ENCODE measurements at regions of chr15 and their contacts with region 1.

Region 1: DNA sequence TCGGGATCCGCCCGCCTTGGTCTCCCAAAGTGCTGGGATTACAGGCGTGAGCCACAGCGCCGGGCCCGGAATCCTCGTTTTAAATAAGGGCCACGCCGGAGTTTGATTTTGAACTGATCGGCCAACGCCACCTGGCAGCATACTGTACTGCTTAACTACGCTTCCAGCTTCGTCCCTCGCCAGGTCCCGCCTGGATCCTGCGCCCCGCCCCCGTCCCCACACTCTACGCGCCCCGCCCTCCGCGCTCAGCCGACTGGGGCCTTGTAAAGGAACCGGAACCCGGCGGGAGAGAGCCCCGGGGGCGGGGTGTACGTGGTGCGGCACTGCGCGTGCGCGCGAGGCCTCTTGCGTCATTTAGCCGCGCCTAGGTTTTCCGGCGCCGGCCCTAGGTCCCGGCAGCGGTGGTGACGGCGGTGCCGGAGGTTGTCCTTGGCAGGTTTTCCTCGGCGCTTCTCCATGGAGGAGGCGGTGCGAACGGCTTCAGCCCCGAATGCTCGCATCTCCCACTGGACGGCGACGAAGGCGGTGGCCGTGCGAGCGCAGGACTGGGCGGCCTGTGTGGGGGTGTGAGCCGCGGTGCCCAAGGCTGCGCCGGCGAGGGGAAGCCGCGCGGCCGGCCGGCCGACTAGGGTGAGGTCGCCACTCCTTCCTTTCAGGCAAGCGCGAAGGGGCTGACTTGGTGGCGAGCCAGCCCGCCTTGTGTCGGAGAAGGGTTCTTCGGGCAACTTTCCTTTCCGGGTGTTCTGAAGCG is at the start of gene NIPA2:
- DNase-seq: peak; percentile 98 to 100 (median 99)
- ATAC-seq: peak; percentile 99
- H3K4me3 ChIP-seq: peak within 1 kb of the TSS; percentile 60 to 92 (median 76)
- H3K27ac ChIP-seq: peak within 1 kb of the TSS; percentile 82 to 97 (median 94)
- H3K4me1 ChIP-seq: peaks cover 3 to 31% (median 20%) of the 10 kb centered on the region in 12 donors
- H3K27me3 ChIP-seq: no peaks in the 10 kb centered on the region
- CTCF ChIP-seq: peak in 1 of 12 donors; percentile 26
- POLR2A ChIP-seq: peak; percentile 38 to 88
- total RNA-seq, gene NIPA2: 17.4 to 32.4 (median 20.6) TPM

Region 2: GRCh38 chr15:22786868-22787698 is 51.4 kb before region 1 on chr15:
- intact Hi-C with region 1: loop called in 6 of 10 experiments (anchors 1 to 10 kb)
- DNase-seq: peak in 4 of 5 donors; percentile 16 to 35 (median 26)
- ATAC-seq: peak in 3 of 4 donors; percentile 27 to 32 (median 29)
- H3K4me3 ChIP-seq: peak overlapping the region; percentile 62 to 97 (median 78)
- H3K27ac ChIP-seq: peak overlapping the region; percentile 53 to 97 (median 90)
- H3K4me1 ChIP-seq: peaks cover 0 to 15% (median 4%) of the 10 kb centered on the region in 12 donors
- H3K27me3 ChIP-seq: no peaks in the 10 kb centered on the region
- CTCF ChIP-seq: no peak
- POLR2A ChIP-seq: no peak

Region 3: GRCh38 chr15:22795206-22796063 is 43.0 kb before region 1 on chr15:
- intact Hi-C with region 1: loop called in 1 of 10 experiments (anchors 5 kb)
- DNase-seq: no peak
- ATAC-seq: peak in 1 of 4 donors; percentile 33
- H3K4me3 ChIP-seq: no peak overlapping the region
- H3K27ac ChIP-seq: no peak overlapping the region
- H3K4me1 ChIP-seq: no peaks in the 10 kb centered on the region
- H3K27me3 ChIP-seq: no peaks in the 10 kb centered on the region
- CTCF ChIP-seq: no peak
- POLR2A ChIP-seq: no peak

Region 4: DNA sequence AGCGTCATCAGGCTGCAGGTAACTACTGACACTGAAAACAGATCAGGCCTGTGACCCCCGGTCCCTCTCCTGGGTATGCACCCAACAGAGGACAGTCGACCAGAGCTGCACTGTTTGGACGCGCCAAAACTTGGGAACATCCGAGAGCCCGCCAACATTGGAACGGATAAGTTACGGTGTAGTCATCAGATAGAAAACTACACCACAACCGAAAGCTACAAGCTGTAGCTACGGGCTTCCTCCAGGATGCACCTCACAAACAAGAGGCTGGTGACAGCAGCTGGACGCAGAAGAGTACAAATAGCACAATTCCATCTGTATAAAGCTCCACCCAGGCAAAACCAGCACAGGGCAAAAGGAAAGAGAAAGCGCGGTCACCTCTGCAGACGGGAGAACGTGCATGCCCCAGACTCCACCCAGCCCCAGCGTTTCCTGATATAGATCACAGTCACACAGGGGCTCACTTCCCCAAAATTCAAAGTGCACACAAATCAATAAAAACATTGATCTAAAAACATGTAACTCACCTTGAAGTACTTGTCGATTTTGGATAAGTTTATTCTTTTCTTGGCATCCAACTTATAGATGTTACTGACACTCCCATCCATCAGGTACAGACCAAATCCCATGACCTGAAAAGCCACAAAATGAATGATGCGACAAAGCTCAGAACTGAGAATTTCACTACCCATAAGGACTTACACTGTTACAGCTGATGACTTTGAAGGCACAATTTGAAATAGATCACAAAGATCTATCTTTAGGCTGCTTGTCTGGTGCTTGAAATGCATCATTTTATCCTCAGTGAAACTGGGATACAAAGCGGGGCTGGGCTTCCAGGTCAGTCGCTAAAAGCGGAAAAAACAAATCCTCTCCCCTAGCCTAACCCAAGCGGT is 98.4 kb after region 1 on chr15:
- intact Hi-C with region 1: no loop called
- DNase-seq: peak in 1 of 5 donors; percentile 5
- ATAC-seq: no peak
- H3K4me3 ChIP-seq: no peak overlapping the region
- H3K27ac ChIP-seq: no peak overlapping the region
- H3K4me1 ChIP-seq: peaks cover 0 to 7% (median 0%) of the 10 kb centered on the region in 12 donors
- H3K27me3 ChIP-seq: no peaks in the 10 kb centered on the region
- CTCF ChIP-seq: no peak
- POLR2A ChIP-seq: no peak

Region 5: DNA sequence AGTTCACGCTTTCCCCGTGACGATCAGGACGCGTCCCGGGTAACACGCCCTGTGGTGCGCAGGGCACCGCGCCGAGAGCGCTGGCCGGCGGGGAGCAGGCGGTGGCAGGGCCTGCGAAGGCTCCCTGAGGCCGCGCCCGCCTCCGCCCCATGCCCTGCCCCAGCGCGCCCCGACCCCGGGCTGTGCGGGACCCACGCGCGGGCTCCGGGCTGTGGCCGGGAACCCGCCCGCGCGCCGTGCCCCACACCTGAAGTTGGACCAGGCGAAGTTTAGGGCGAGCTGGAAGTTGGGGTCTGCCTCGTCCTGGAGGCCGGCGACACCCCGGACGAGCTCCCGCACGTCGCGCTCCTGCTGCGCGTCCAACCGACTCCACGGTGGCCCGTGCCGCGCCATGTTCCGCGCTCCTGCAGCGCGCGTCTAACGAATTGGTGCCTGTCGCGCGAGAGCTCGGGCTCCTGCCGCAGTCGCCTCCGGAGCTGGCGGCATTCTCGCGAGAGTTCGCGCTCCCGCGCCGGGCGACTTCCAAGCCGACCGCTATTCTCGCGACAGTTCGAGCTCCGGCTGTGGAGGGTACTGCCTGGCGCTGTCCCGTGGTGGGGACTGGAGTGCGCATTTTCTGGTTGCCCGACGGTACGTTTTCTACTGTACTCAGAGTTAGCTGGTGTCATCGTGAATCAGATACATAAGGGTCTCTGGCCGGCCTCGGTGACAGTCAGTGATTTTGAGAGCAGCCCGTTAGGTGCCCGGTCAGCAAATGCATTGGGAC is 200.9 kb after region 1 on chr15 and contains the start of gene TUBGCP5:
- intact Hi-C with region 1: loop called in 1 of 10 experiments (anchors 10 kb)
- DNase-seq: peak; percentile 97 to 99 (median 98)
- ATAC-seq: peak; percentile 97 to 99 (median 98)
- H3K4me3 ChIP-seq: peak within 1 kb of the TSS; percentile 57 to 92 (median 72)
- H3K27ac ChIP-seq: peak within 1 kb of the TSS; percentile 63 to 93 (median 80)
- H3K4me1 ChIP-seq: peaks cover 0 to 17% (median 12%) of the 10 kb centered on the region in 12 donors
- H3K27me3 ChIP-seq: no peaks in the 10 kb centered on the region
- CTCF ChIP-seq: peak in 10 of 12 donors; percentile 14 to 56 (median 40)
- POLR2A ChIP-seq: peak; percentile 17 to 94
- total RNA-seq, gene TUBGCP5: 9.5 to 14.7 (median 13.2) TPM